ENCODE measurements at regions of chr7 and their contacts with region 1.

Region 1: DNA sequence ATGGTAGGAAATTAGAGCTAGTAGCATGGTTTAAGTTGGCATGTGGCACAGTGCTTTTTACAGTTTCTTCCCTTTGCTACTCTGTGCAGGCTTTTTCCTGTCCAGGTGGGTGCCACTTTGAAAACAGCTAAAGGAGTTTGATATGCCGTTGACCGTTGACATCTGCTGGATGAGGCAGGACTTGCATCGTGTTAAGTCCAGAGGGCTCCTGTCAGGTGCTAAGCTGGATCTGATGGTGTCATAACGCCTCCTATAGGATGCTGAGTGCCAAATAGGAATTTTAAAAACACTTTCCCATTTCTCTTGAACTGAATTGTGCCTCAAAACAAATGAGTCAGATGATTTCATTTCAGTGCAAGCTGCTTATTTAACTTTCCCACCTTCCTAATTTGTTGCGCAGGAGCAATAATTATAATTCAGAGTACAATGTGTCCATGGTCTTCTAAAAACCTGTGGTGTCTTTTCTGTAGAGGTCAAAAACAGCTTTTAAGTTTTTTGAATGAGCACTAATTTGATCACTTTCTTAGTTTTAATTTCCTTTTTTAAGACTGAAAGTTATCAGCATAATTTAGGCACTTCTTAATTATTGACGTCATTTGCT is 178.3 kb downstream of the CDCA7L start:
- DNase-seq: peak; percentile 88
- H3K4me3 Mint-ChIP-seq: no peak overlapping the region
- H3K27ac Mint-ChIP-seq: no peak overlapping the region
- H3K4me1 Mint-ChIP-seq: no peaks in the 10 kb centered on the region
- H3K27me3 Mint-ChIP-seq: peaks cover 10% of the 10 kb centered on the region
- CTCF ChIP-seq: peak; percentile 85

Region 2: GRCh38 chr7:20778063-20778721 is 989.2 kb before region 1 on chr7:
- CTCF ChIA-PET with region 1: interaction called, 23 read pairs
- POLR2A ChIA-PET with region 1: no interaction called
- intact Hi-C with region 1: loop called (anchors 1 kb)
- DNase-seq: peak; percentile 21
- H3K4me3 Mint-ChIP-seq: peak overlapping the region; percentile 58
- H3K27ac Mint-ChIP-seq: no peak overlapping the region
- H3K4me1 Mint-ChIP-seq: peaks cover 10% of the 10 kb centered on the region
- H3K27me3 Mint-ChIP-seq: peaks cover 37% of the 10 kb centered on the region
- CTCF ChIP-seq: peak; percentile 81

Region 3: GRCh38 chr7:21261627-21262594 is 505.5 kb before region 1 on chr7:
- CTCF ChIA-PET with region 1: interaction called, 72 read pairs
- POLR2A ChIA-PET with region 1: interaction called, 8 read pairs
- intact Hi-C with region 1: loop called (anchors 1 kb)
- DNase-seq: peak; percentile 45
- H3K4me3 Mint-ChIP-seq: no peak overlapping the region
- H3K27ac Mint-ChIP-seq: no peak overlapping the region
- H3K4me1 Mint-ChIP-seq: no peaks in the 10 kb centered on the region
- H3K27me3 Mint-ChIP-seq: no peaks in the 10 kb centered on the region
- CTCF ChIP-seq: peak; percentile 48

Region 4: DNA sequence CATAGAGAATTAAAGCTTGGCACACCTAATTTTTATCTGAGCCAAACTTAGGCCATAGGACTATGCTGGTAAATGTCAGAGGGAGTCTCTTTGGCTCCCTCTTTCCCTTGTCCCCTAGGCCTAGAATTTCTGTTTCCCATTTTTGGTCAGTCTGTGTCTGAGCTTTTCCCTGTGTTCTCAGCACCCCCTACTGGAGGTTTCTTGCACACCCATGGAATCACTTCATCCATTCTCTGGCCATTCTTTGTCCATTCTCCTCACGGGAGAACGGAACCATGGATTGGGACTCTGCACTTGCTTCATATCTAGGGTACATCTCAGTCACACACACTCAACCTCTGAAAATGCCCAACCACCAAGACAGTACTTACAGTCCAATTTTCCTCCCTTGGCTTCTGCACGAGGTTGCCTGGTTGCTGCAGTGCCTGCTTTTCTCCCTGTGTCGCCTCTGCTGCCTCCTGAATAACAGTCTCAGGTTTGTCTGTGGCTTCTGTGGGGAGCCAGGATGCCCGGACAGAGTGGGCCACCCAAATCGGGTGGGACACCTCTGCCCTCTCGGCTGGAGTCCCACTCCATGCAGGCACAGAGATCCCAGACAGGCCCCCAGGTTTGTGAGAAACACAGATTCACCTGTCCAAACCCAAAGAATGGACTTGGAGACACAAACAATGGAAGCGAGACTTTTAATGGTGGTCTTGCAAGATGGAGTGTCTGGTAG is 259.6 kb before region 1 on chr7:
- CTCF ChIA-PET with region 1: interaction called, 3 read pairs
- POLR2A ChIA-PET with region 1: interaction called, 4 read pairs
- intact Hi-C with region 1: loop called (anchors 1 kb)
- DNase-seq: peak; percentile 58
- H3K4me3 Mint-ChIP-seq: no peak overlapping the region
- H3K27ac Mint-ChIP-seq: no peak overlapping the region
- H3K4me1 Mint-ChIP-seq: no peaks in the 10 kb centered on the region
- H3K27me3 Mint-ChIP-seq: no peaks in the 10 kb centered on the region
- CTCF ChIP-seq: peak; percentile 54

Region 5: DNA sequence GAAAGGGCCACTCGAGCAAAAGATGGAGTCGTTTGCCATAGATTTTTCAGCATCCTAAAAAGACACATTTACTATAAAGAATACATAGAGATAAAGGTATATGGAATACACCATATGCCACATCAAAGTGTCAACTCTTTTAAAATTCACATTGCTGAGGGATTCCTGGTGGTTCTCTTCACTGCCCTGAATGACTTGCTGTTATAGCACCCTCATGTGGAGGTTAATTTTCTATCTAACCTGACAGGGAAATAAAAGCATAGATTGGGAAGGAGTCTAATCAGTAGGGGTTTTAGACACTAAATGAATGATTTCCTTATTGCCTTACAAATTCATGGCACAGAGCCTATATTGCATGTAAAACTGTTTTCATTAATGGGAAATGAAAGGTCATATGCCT is 198.6 kb before region 1 on chr7:
- CTCF ChIA-PET with region 1: interaction called, 9 read pairs
- POLR2A ChIA-PET with region 1: no interaction called
- intact Hi-C with region 1: loop called (anchors 5 kb)
- DNase-seq: peak; percentile 36
- H3K4me3 Mint-ChIP-seq: no peak overlapping the region
- H3K27ac Mint-ChIP-seq: peak overlapping the region; percentile 42
- H3K4me1 Mint-ChIP-seq: no peaks in the 10 kb centered on the region
- H3K27me3 Mint-ChIP-seq: no peaks in the 10 kb centered on the region
- CTCF ChIP-seq: peak; percentile 18

Region 6: GRCh38 chr7:21587139-21587784 is 180.1 kb before region 1 on chr7:
- CTCF ChIA-PET with region 1: no interaction called
- POLR2A ChIA-PET with region 1: no interaction called
- intact Hi-C with region 1: no loop called
- DNase-seq: no peak
- H3K4me3 Mint-ChIP-seq: no peak overlapping the region
- H3K27ac Mint-ChIP-seq: no peak overlapping the region
- H3K4me1 Mint-ChIP-seq: no peaks in the 10 kb centered on the region
- H3K27me3 Mint-ChIP-seq: no peaks in the 10 kb centered on the region
- CTCF ChIP-seq: no peak

Region 7: DNA sequence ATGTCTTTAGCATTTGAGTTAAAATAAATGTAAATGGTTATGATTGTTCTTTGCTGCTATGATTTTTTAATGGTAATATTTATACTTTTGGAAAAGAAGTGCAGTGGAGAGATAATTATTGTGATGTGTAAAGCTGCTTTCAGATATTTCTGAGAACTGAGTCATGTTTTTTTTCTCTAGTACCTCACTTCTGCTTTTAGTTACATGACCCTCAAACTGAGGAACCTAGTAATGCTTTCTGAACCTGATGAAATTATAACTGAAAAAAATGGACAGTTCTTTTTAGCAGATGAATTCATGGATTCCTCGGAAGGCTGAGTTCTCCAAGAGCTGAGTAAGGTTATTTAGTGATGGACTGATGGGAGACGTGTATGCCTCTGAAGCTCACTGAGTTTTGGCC is 10.5 kb after region 1 on chr7:
- CTCF ChIA-PET with region 1: interaction called, 15 read pairs
- POLR2A ChIA-PET with region 1: no interaction called
- intact Hi-C with region 1: no loop called
- DNase-seq: no peak
- H3K4me3 Mint-ChIP-seq: no peak overlapping the region
- H3K27ac Mint-ChIP-seq: no peak overlapping the region
- H3K4me1 Mint-ChIP-seq: no peaks in the 10 kb centered on the region
- H3K27me3 Mint-ChIP-seq: no peaks in the 10 kb centered on the region
- CTCF ChIP-seq: no peak

Region 8: DNA sequence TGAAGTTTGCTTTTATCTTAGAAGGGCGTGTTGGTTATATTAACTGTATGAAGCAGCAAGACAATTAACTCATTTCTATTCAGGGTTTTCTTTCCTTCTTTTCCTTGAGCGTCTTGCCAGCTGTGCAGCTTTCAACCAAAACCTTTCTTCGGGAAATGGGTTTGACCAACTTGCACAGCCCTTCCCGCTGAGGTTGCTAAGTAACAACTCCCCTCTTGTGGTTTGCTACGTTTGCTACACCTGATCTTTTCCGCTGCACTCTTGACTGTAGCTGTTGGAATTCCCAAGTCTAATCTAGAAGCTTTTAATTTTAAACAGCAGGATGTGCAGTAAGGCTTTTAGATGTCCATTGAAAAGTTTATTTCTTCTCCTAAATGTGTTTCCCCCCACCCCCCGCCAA is 61.4 kb after region 1 on chr7:
- CTCF ChIA-PET with region 1: no interaction called
- POLR2A ChIA-PET with region 1: no interaction called
- intact Hi-C with region 1: no loop called
- DNase-seq: no peak
- H3K4me3 Mint-ChIP-seq: no peak overlapping the region
- H3K27ac Mint-ChIP-seq: no peak overlapping the region
- H3K4me1 Mint-ChIP-seq: no peaks in the 10 kb centered on the region
- H3K27me3 Mint-ChIP-seq: no peaks in the 10 kb centered on the region
- CTCF ChIP-seq: no peak

Region 9: GRCh38 chr7:22082886-22083703 is 315.7 kb after region 1 on chr7:
- CTCF ChIA-PET with region 1: interaction called, 4 read pairs
- POLR2A ChIA-PET with region 1: interaction called, 3 read pairs
- intact Hi-C with region 1: loop called (anchors 1 kb)
- DNase-seq: peak; percentile 76
- H3K4me3 Mint-ChIP-seq: peak overlapping the region; percentile 73
- H3K27ac Mint-ChIP-seq: peak overlapping the region; percentile 73
- H3K4me1 Mint-ChIP-seq: no peaks in the 10 kb centered on the region
- H3K27me3 Mint-ChIP-seq: peaks cover 22% of the 10 kb centered on the region
- CTCF ChIP-seq: peak; percentile 93

Region 10: GRCh38 chr7:22420973-22421635 is 653.7 kb after region 1 on chr7:
- CTCF ChIA-PET with region 1: no interaction called
- POLR2A ChIA-PET with region 1: no interaction called
- intact Hi-C with region 1: no loop called
- DNase-seq: no peak
- H3K4me3 Mint-ChIP-seq: no peak overlapping the region
- H3K27ac Mint-ChIP-seq: no peak overlapping the region
- H3K4me1 Mint-ChIP-seq: no peaks in the 10 kb centered on the region
- H3K27me3 Mint-ChIP-seq: no peaks in the 10 kb centered on the region
- CTCF ChIP-seq: no peak